Activated T-helper 1 cell treated with anti-CD3 and anti-CD28 coated beads, Interleukin-12 subunit alpha, Interleukin-12 subunit beta, Interleukin-2, Interleukin-4 antibody, amounts not matched to agents 30 ng/mL and 10 ng/mL and 1 ng/mL, durations not matched to agents 14 hours and 24 hours and 36 hours (primary cell): ENCODE measurements at regions of chr11 and their contacts with region 1.

Region 1: GRCh38 chr11:76207642-76208401 is 1.5 kb upstream of the WNT11 start:
- DNase-seq: peak; percentile 70
- H3K4me3 Mint-ChIP-seq: peak overlapping the region; percentile 73
- H3K27ac Mint-ChIP-seq: no peak overlapping the region
- H3K4me1 Mint-ChIP-seq: peaks cover 12% of the 10 kb centered on the region
- H3K27me3 Mint-ChIP-seq: peaks cover 56% of the 10 kb centered on the region

Region 2: DNA sequence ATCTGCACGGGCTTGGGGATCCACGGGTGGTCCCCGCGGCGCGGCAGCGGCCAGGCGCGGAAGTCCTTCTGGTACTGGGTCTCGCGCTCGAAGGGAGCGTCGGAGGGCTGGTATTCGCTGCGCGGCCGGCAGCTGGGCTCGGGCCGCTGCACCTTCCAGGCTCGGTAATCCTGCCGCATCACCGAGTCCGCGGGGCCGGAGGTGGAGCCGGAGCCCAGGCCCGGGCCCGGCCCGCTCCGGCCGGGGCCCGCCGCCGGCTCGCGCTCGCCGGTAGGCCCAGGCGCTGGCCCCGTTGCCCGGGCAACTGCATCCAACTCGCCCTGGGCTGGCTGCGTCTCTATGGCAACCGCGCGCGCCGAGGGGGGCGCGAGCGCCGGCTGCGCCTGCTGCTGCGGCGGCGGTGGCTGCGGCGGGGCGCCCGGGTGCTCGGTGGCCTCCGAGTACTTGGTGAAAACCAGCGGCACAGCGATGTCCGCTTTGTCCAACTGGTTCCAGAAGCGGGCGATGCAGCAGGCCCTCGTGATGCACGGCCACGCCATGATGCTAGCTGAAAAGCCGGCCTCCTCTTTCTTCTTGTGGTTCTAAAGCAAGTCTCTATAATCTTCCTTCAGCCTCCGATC is 539.9 kb before region 1 on chr11:
- intact Hi-C with region 1: no loop called
- DNase-seq: peak; percentile 34
- H3K4me3 Mint-ChIP-seq: peak overlapping the region; percentile 94
- H3K27ac Mint-ChIP-seq: peak overlapping the region; percentile 82
- H3K4me1 Mint-ChIP-seq: peaks cover 52% of the 10 kb centered on the region
- H3K27me3 Mint-ChIP-seq: peaks cover 63% of the 10 kb centered on the region

Region 3: GRCh38 chr11:75896843-75897419 is 310.9 kb before region 1 on chr11:
- intact Hi-C with region 1: loop called (anchors 1 kb)
- DNase-seq: no peak
- H3K4me3 Mint-ChIP-seq: no peak overlapping the region
- H3K27ac Mint-ChIP-seq: no peak overlapping the region
- H3K4me1 Mint-ChIP-seq: peaks cover 3% of the 10 kb centered on the region
- H3K27me3 Mint-ChIP-seq: no peaks in the 10 kb centered on the region

Region 4: DNA sequence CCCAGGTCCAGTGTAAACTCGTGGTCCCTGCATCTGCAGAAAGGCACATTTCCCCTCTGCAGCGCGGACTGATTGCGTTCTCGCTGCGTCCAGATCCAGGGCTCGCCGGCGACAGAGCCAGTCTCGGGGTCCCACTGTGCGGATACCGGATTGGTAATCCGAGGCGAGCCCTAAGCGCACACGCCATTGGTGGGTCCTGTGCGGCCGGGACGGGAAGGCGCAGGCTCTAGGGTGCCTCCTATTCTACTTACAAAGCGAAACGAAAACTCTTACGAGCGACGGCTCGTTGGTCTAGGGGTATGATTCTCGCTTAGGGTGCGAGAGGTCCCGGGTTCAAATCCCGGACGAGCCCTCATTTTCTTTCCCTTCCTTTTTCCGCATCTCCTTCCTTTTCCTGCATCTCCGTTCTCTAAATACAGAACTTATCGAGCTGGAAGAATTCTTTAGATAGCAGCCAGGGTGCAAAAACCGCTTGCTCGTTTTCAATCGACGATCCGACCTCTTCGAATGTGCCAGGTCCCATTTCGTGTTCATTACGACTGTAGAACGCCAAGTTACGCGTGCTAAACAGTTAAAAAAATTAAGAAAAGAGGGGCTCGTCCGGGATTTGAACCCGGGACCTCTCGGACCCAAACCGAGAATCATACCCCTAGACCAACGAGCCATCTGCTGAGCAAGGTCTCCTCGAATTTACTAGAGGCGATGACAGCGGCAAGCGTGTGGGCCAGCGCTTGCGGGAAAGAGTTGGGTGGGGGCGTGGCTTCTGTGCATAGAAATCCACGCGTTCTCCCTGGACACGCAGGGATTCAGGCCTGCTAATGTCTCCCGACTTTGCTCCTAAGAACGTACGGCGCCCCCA is 27.6 kb after region 1 on chr11:
- intact Hi-C with region 1: loop called (anchors 1 kb)
- DNase-seq: peak; percentile 85
- H3K4me3 Mint-ChIP-seq: peak overlapping the region; percentile 92
- H3K27ac Mint-ChIP-seq: peak overlapping the region; percentile 84
- H3K4me1 Mint-ChIP-seq: peaks cover 50% of the 10 kb centered on the region
- H3K27me3 Mint-ChIP-seq: peaks cover 30% of the 10 kb centered on the region

Region 5: GRCh38 chr11:76512851-76513653 is 305.2 kb after region 1 on chr11:
- intact Hi-C with region 1: loop called (anchors 1 kb)
- DNase-seq: no peak
- H3K4me3 Mint-ChIP-seq: no peak overlapping the region
- H3K27ac Mint-ChIP-seq: no peak overlapping the region
- H3K4me1 Mint-ChIP-seq: no peaks in the 10 kb centered on the region
- H3K27me3 Mint-ChIP-seq: no peaks in the 10 kb centered on the region

Region 6: DNA sequence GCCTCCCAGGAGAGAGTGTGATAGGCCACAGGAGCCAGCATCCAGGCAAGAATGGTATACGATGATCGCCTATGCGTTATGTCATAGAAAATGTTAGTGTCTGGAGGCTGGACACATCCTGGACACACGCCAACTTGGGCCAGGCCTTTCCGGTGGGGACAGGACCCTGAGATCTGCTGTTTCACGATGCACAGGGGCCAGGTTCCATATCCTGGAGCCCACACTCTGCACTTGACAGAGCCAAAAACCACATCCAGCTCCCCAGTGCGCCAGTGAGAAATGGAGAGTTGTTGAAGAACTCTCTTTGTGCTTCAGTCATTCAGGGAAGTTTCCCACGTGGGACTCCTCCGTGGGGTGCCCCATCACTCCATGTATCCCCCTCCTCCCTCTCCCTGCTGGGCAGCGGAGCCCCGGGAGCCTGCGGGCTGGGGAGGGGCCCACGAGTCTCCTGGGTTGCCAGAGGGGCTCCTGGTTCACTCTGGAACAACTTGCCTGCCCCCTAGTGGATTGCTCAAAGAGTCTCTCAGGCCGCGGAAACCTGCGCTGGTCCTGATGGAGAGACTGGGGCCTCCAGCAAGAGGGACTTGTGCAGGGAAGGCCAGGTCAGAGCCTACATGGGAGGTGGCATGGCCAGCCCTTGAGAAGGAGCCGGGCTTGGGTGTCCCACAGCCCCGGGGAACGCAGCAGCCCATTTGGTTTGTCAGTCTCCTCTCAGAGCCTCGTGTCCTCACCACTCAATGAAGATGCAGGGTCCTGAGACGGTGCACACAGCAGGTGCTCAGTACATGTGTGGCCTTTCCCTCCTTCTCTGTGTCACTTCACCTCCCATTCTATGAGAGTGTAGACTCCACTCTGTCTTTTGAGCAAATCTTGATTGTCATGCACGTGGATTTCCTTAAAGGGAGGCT is 472.9 kb after region 1 on chr11:
- intact Hi-C with region 1: loop called (anchors 2 kb)
- DNase-seq: peak; percentile 55
- H3K4me3 Mint-ChIP-seq: no peak overlapping the region
- H3K27ac Mint-ChIP-seq: no peak overlapping the region
- H3K4me1 Mint-ChIP-seq: peaks cover 37% of the 10 kb centered on the region
- H3K27me3 Mint-ChIP-seq: peaks cover 22% of the 10 kb centered on the region